K562 (cell line): ENCODE measurements at regions of chr14 and their contacts with region 1.

Region 1: DNA sequence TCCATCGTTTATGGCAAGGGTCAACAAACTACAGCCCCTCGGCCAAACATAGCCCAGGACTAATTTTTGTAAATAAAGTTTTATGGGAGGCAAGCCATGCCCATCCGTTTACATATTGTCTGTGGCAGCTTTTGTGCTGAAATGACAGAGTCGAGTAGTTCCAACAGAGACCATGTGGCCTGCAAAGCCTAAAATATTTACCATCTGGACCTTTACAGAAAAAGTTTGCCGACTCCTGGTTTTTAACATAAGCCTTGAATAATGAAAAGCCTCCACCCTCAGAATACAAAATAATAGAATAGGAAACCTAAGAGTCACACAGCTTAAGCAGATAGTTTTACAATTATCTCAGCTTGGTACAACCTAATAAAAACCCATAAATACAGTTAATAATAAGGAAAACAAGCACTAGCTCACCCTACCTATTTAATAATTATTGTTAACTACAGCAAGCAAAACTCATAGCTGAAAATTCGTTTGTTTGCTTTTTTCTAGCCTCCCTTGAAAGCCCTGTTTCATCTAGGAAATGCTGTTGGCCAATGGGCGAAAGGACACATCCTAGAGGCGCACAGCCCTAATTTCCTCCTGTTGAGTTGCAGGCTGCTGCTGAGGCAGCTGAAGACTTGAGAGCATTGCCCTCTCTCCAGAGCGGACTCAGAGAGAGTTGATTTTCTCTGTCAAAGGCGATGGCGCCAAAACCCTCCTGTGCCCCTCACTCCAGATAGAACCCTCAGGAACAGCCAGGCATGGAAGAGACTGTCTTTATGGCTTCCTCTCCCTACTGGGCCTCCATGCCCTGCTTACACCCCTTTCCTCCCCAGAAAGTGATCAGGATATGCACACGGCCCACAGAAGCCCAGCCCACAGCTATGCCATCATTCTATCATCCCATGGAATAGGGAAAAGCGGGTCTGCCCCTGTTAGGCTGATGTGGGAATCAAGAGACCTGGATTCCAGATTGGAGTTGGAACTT is 107.2 kb downstream of the DPF3 start:
- DNase-seq: no peak
- ATAC-seq: no peak
- H3K4me3 ChIP-seq: no peak overlapping the region
- H3K27ac ChIP-seq: no peak overlapping the region
- H3K4me1 ChIP-seq: peaks cover 0 to 2% of the 10 kb centered on the region in 2 experiments; a peak in 2 of 5 replicates
- H3K27me3 ChIP-seq: no peaks in the 10 kb centered on the region; a peak in 1 of 5 replicates
- CTCF ChIP-seq: no peak
- EP300 ChIP-seq: no peak
- POLR2A ChIP-seq: no peak
- RAD21 ChIP-seq: no peak

Region 2: GRCh38 chr14:72736314-72736715 is 50.3 kb before region 1 on chr14:
- CTCF ChIA-PET with region 1: no interaction called
- POLR2A ChIA-PET with region 1: no interaction called
- in situ Hi-C with region 1: no loop called
- intact Hi-C with region 1: loop called (anchors 2 kb)
- DNase-seq: peak; percentile 37 to 60 (median 47)
- ATAC-seq: peak; percentile 91
- H3K4me3 ChIP-seq: no peak overlapping the region
- H3K27ac ChIP-seq: no peak overlapping the region
- H3K4me1 ChIP-seq: peaks cover 2 to 5% of the 10 kb centered on the region in 2 experiments; a peak in 3 of 5 replicates
- H3K27me3 ChIP-seq: no peaks in the 10 kb centered on the region; a peak in 1 of 5 replicates
- CTCF ChIP-seq: peak in 1 of 3 experiments; percentile 25; a peak in 2 of 6 replicates
- EP300 ChIP-seq: no peak
- POLR2A ChIP-seq: no peak
- RAD21 ChIP-seq: peak in 1 of 2 experiments; percentile 30; a peak in 1 of 4 replicates